HCT116 (cell line): ENCODE measurements at regions of chr3 and their contacts with region 1.

Region 1: DNA sequence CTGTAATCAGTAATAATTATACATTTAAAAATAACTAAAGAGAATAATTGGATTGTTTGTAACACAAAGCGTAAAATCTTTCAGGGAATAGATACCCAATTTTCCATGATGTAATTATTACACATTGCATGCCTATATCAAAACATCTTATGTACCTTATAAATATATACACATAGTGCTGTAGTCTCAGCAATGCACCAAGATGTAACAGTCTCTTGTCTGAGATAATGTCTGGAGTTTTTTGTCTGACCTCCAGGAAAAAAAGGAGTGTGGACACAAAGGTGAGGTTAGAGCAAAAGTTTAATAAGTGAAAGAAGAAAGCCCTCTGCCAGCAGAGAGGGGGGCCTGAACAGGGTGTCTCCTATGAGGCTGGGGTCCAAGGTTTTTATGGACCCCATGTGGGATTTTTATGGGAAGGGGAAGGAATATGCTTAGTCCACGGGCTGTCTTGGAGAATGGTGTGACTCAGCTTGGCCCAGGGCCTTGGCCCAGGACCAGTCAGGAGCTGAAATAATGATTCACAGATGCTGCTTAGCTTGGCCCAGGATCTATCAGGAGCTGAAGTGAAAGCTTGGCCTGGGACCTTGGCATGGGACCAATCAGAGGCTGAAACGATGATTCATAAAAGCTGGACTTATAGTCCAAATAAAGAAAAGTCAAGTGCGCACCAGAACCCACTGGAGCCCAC is 545.0 kb downstream of the ZPLD1 start:
- DNase-seq: peak; percentile 89
- ATAC-seq: peak; percentile 99
- H3K4me3 ChIP-seq: no peak overlapping the region
- H3K27ac ChIP-seq: no peak overlapping the region
- H3K4me1 ChIP-seq: peaks cover 14 to 17% of the 10 kb centered on the region in 2 experiments
- H3K27me3 ChIP-seq: no peaks in the 10 kb centered on the region
- CTCF ChIP-seq: no peak
- POLR2A ChIP-seq: no peak
- RAD21 ChIP-seq: no peak

Region 2: GRCh38 chr3:102926618-102927017 is 53.2 kb before region 1 on chr3:
- CTCF ChIA-PET with region 1: no interaction called
- POLR2A ChIA-PET with region 1: no interaction called
- RAD21 ChIA-PET with region 1: no interaction called
- intact Hi-C with region 1: loop called (anchors 5 kb)
- DNase-seq: no peak
- ATAC-seq: no peak
- H3K4me3 ChIP-seq: no peak overlapping the region
- H3K27ac ChIP-seq: no peak overlapping the region
- H3K4me1 ChIP-seq: no peaks in the 10 kb centered on the region
- H3K27me3 ChIP-seq: no peaks in the 10 kb centered on the region
- CTCF ChIP-seq: no peak
- POLR2A ChIP-seq: no peak
- RAD21 ChIP-seq: no peak